CD8-positive, alpha-beta T cell (primary cell): ENCODE measurements at regions of chr6 and their contacts with region 1.

Region 1: DNA sequence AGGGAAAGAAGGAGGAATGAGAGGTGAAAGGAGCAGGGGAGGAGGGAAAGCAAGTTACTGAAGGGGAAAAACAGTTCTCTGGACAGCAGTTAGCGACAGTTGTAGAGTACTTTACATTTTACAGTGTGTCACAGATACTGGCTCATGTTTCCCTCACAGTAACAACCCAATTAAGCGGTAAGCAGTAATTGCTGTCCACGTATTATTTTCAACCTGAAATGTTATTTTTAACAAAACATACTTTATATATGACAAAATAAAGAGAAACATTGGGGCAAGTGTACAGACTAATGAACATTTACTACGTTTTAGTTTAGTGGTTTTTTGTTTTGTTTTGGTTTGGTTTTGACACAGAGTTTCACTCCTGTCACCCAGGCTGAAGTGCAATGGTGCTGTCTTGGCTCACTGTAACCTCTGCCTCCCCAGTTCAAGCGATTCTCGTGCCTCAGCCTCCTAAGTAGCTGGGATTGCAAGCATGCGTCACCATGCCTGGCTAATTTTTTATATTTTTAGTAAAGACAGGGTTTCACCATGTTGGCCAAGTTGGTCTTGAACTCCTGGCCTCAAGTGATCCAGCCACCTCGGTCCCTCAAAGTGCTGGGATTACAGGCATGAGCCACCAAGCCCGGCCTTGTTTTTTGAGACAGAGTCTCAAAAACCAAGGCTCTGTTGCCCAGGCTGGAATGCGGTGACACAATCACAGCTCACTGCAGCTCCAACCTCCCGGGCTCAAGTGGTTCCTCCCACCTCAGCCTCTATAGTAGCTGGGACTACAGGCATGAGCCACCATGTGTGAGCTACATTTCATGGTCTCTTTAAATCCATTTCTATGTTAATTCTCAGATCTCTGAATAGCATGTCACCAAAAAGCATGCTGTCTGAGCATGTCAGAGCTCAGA is 22.6 kb upstream of the BTN3A2 start:
- DNase-seq: peak in 1 of 9 experiments; percentile 37
- ATAC-seq: peak; percentile 18
- H3K4me3 ChIP-seq: peak overlapping the region; percentile 33 to 49
- H3K4me3 Mint-ChIP-seq: peak overlapping the region; percentile 76
- H3K27ac ChIP-seq: peak overlapping the region in 1 of 2 experiments; percentile 52
- H3K27ac Mint-ChIP-seq: peak overlapping the region; percentile 71
- H3K4me1 ChIP-seq: peaks cover 4% of the 10 kb centered on the region
- H3K4me1 Mint-ChIP-seq: peaks cover 6% of the 10 kb centered on the region
- H3K27me3 ChIP-seq: no peaks in the 10 kb centered on the region
- H3K27me3 Mint-ChIP-seq: peaks cover 2% of the 10 kb centered on the region
- CTCF ChIP-seq: no peak

Region 2: DNA sequence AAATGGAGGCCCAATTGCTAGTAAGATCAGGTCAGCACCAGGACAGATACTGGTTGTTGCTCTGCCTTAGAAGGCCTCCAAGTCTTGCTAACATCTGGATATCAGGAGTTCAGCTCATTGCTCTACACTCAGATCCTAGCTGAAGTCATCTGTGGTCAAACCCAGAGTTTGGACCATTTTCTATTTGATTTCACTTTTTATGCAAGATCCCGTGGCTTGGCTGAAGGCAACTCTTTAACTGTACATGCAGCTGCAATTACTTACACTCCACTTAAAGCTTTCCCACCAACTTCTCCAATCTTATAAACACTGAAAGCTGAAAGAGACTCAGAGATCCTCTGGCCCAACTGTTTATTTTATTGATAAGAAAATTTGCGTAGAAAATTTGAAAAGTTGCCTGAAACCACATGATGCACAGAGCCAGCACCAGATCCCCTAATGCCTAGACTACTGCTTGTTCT is 414.6 kb before region 1 on chr6:
- CTCF ChIA-PET with region 1: no interaction called
- POLR2A ChIA-PET with region 1: no interaction called
- intact Hi-C with region 1: no loop called
- DNase-seq: no peak
- ATAC-seq: no peak
- H3K4me3 ChIP-seq: no peak overlapping the region
- H3K4me3 Mint-ChIP-seq: no peak overlapping the region
- H3K27ac ChIP-seq: no peak overlapping the region
- H3K27ac Mint-ChIP-seq: no peak overlapping the region
- H3K4me1 ChIP-seq: no peaks in the 10 kb centered on the region
- H3K4me1 Mint-ChIP-seq: no peaks in the 10 kb centered on the region
- H3K27me3 ChIP-seq: no peaks in the 10 kb centered on the region
- H3K27me3 Mint-ChIP-seq: peaks cover 2% of the 10 kb centered on the region
- CTCF ChIP-seq: no peak

Region 3: DNA sequence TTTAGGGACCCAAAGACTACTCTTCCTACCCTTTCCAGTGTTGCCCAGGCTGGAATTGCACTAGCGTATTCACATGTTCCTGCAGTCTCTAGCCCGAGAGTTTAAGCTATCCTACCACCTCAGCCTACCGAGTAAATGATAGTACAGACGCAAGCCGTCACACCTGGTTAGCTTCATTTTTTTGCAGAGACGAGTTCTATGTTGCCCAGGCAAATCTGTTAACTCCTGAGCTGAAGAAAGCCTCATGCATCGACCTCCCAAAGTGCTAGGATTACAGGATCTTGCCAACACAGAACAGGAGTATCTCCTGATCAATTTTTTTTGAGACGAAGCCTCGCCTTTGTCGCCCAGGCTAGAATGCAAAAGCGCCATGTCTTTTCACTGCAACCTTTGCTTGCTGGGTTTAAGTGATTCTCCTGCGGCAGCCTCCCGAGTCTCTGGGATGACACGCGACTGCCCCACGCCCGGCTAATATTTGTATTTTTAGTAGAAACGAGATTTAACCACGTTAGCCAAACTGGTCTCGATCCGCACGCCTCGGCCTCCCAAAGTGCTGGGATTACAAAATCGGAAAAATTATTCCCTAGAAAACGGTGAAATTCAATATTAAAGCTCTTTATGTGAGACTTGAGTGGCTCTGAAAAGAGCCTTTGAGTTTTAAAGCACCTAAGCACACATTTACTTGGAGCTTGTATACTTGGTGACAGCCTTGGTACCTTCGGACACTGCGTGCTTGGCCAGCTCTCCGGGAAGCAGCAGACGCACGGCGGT is 126.6 kb before region 1 on chr6:
- CTCF ChIA-PET with region 1: no interaction called
- POLR2A ChIA-PET with region 1: no interaction called
- intact Hi-C with region 1: no loop called
- DNase-seq: peak in 5 of 9 experiments; percentile 30 to 62 (median 34)
- ATAC-seq: peak; percentile 5
- H3K4me3 ChIP-seq: peak overlapping the region; percentile 63 to 71
- H3K4me3 Mint-ChIP-seq: no peak overlapping the region
- H3K27ac ChIP-seq: peak overlapping the region; percentile 82 to 91
- H3K27ac Mint-ChIP-seq: no peak overlapping the region
- H3K4me1 ChIP-seq: peaks cover 19% of the 10 kb centered on the region
- H3K4me1 Mint-ChIP-seq: peaks cover 14% of the 10 kb centered on the region
- H3K27me3 ChIP-seq: no peaks in the 10 kb centered on the region
- H3K27me3 Mint-ChIP-seq: no peaks in the 10 kb centered on the region
- CTCF ChIP-seq: no peak

Region 4: DNA sequence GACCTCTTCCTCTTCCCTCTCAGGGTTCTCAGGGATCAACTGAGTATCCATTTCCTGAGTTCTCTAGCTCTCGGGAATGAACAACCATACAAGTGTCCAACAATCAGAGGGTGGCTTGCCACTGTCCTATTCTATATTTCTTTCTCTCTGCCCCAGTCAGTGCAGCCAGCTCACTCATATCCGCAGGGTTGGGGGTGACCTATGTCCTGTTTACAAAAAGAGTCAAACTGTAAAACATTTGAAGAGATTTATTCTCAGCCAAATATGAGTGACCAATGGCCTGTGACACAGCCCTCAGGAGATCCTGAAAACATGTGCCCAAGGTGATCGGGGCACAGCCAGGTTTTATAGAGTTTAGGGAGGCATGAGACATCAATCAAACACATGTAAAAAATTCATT is 11.8 kb after region 1 on chr6:
- CTCF ChIA-PET with region 1: interaction called, 12 read pairs
- POLR2A ChIA-PET with region 1: no interaction called
- intact Hi-C with region 1: no loop called
- DNase-seq: no peak
- ATAC-seq: no peak
- H3K4me3 ChIP-seq: no peak overlapping the region
- H3K4me3 Mint-ChIP-seq: no peak overlapping the region
- H3K27ac ChIP-seq: no peak overlapping the region
- H3K27ac Mint-ChIP-seq: no peak overlapping the region
- H3K4me1 ChIP-seq: peaks cover 4% of the 10 kb centered on the region
- H3K4me1 Mint-ChIP-seq: peaks cover 3% of the 10 kb centered on the region
- H3K27me3 ChIP-seq: no peaks in the 10 kb centered on the region
- H3K27me3 Mint-ChIP-seq: no peaks in the 10 kb centered on the region
- CTCF ChIP-seq: no peak

Region 5: GRCh38 chr6:26421259-26422144 is 79.1 kb after region 1 on chr6:
- CTCF ChIA-PET with region 1: interaction called, 13 read pairs
- POLR2A ChIA-PET with region 1: no interaction called
- intact Hi-C with region 1: loop called (anchors 1 kb)
- DNase-seq: peak in 8 of 9 experiments; percentile 26 to 85 (median 47)
- ATAC-seq: peak; percentile 95
- H3K4me3 ChIP-seq: peak overlapping the region; percentile 76 to 98
- H3K4me3 Mint-ChIP-seq: no peak overlapping the region
- H3K27ac ChIP-seq: peak overlapping the region; percentile 20 to 81
- H3K27ac Mint-ChIP-seq: no peak overlapping the region
- H3K4me1 ChIP-seq: peaks cover 5% of the 10 kb centered on the region
- H3K4me1 Mint-ChIP-seq: peaks cover 16% of the 10 kb centered on the region
- H3K27me3 ChIP-seq: no peaks in the 10 kb centered on the region
- H3K27me3 Mint-ChIP-seq: no peaks in the 10 kb centered on the region
- CTCF ChIP-seq: no peak

Region 6: DNA sequence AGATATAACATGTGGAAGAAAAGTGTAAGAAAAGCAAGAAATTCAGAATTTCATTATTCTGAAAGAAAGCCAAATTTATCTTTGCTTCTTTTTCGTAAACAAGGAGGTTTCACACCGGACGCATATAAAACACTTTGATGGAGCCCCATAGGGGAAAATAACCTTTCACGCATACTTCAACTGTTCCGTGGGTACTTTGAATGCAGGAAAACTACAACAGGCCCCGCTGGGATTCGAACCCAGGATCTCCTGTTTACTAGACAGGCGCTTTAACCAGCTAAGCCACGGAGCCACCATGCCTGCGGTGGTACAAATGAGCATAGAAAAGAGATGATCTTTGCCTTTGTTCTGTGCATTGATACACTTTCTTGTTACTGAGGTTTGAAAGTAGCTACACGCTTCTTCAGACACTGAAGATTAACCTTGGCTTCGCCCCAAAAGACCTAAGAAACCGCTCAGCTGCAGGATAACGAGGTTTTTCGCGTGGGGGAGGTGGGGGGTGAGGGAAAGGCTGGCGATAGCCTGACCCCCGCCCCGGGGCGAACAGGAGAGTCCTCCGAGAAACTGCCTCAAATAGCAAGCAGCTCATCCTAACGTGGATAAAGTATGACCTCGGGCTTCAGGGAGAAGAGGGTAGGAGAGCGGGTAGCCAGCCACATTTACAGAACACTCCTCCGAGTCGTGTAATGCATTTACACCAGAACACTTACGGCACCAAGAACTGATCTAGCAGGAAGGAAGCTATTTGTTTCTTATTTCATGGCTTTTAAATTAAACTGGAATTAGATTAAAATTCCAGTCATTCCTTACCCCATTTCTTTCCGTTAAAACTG is 190.6 kb after region 1 on chr6:
- CTCF ChIA-PET with region 1: interaction called, 14 read pairs
- POLR2A ChIA-PET with region 1: no interaction called
- intact Hi-C with region 1: no loop called
- DNase-seq: peak; percentile 82 to 97 (median 91)
- ATAC-seq: peak; percentile 35
- H3K4me3 ChIP-seq: peak overlapping the region; percentile 69 to 80
- H3K4me3 Mint-ChIP-seq: peak overlapping the region; percentile 100
- H3K27ac ChIP-seq: peak overlapping the region; percentile 53 to 57
- H3K27ac Mint-ChIP-seq: peak overlapping the region; percentile 97
- H3K4me1 ChIP-seq: peaks cover 25% of the 10 kb centered on the region
- H3K4me1 Mint-ChIP-seq: peaks cover 52% of the 10 kb centered on the region
- H3K27me3 ChIP-seq: no peaks in the 10 kb centered on the region
- H3K27me3 Mint-ChIP-seq: peaks cover 2% of the 10 kb centered on the region
- CTCF ChIP-seq: no peak

Region 7: GRCh38 chr6:26553635-26554446 is 211.5 kb after region 1 on chr6:
- CTCF ChIA-PET with region 1: interaction called, 8 read pairs
- POLR2A ChIA-PET with region 1: no interaction called
- intact Hi-C with region 1: loop called in 1 of 2 experiments (anchors 5 kb)
- DNase-seq: peak; percentile 51 to 91 (median 73)
- ATAC-seq: peak; percentile 35
- H3K4me3 ChIP-seq: peak overlapping the region; percentile 64 to 70
- H3K4me3 Mint-ChIP-seq: no peak overlapping the region
- H3K27ac ChIP-seq: peak overlapping the region; percentile 17 to 60
- H3K27ac Mint-ChIP-seq: no peak overlapping the region
- H3K4me1 ChIP-seq: peaks cover 28% of the 10 kb centered on the region
- H3K4me1 Mint-ChIP-seq: peaks cover 21% of the 10 kb centered on the region
- H3K27me3 ChIP-seq: no peaks in the 10 kb centered on the region
- H3K27me3 Mint-ChIP-seq: no peaks in the 10 kb centered on the region
- CTCF ChIP-seq: no peak

Region 8: GRCh38 chr6:26596579-26597388 is 254.4 kb after region 1 on chr6 and contains the start of gene ABT1:
- CTCF ChIA-PET with region 1: interaction called, 85 read pairs
- POLR2A ChIA-PET with region 1: interaction called, 6 read pairs
- intact Hi-C with region 1: loop called (anchors 1 kb)
- DNase-seq: peak; percentile 94 to 99 (median 97)
- ATAC-seq: peak; percentile 85
- H3K4me3 ChIP-seq: peak within 1 kb of the TSS; percentile 93 to 94
- H3K4me3 Mint-ChIP-seq: no peak within 1 kb of the TSS
- H3K27ac ChIP-seq: peak within 1 kb of the TSS; percentile 90 to 94
- H3K27ac Mint-ChIP-seq: no peak within 1 kb of the TSS
- H3K4me1 ChIP-seq: peaks cover 18% of the 10 kb centered on the region
- H3K4me1 Mint-ChIP-seq: peaks cover 23% of the 10 kb centered on the region
- H3K27me3 ChIP-seq: peaks cover 0 to 4% of the 10 kb centered on the region in 2 experiments
- H3K27me3 Mint-ChIP-seq: peaks cover 10% of the 10 kb centered on the region
- CTCF ChIP-seq: no peak
- total RNA-seq, gene ABT1: 42.5 to 44.2 TPM